ENCODE measurements at regions of chr6 and their contacts with region 1.

Region 1: DNA sequence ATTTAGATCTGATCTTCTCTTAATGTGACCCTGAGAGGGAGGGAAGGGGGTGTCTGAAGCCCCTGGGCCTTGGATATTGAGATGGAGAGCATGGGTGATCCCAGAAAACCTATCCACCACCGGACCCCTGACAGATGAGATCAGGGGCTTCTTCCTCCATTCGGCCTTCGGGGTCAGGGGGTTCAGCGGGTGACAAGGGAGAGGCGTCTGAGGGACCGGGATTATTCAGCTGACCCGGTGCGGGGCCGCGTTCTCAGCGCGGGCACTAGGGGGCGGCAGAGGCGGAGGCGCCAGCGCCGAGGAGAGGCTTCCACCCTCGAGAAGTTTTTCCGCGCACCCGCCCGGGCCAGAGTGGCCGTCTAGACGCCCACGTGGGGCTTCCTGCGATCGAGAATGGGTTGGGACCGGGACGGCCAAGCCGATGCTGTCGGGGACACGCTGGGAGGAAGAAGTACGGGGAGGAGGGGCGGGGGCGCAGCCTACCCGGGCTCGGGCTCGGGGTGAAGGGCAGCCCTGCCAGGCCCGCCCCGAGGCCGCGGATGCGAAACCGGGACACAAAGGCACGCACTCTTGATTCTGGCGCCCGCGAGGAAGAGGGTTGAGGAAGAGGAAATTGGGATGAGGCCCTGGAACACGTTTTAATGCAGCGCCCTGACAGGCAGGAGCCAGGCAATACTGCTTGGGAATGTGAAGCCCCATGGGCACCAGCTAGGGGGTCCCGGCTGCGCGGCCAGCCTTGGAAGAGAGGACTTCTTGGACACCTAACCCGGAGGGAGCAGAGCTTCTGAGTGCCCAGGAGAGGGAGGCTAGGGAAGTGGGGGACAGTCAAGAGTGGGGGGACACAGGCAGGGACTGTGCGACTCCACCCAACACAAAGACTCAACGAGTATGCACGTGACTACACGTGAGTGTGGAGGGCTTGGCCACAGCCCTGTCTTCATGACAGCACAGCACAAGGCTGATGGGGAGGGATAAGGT is 30.6 kb downstream of the COL11A2 start:
- DNase-seq: peak; percentile 92
- ATAC-seq: peak; percentile 91

Region 2: DNA sequence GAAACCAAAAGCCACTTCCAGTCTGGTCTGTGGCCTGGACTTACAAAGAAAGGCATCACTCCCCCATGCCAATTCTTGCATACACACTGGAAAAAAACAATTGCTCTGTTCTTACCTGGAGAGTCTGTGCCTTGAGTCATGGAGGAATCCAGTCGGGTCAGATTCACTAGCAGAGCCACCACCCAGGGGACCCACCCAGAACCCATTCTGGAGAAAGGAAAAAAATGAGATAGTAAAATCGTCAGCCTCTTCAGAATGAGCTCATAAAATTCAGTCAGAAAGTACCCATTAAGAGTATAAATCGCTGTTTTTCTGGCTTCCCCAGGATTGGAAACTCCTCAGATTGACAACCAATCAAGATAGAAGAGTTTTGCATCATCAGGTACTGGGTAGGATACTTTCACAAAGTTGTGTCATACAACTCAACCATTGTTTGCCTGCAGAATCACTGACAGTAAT is 344.9 kb before region 1 on chr6 and contains the start of gene HLA-DOB:
- intact Hi-C with region 1: no loop called
- DNase-seq: no peak
- ATAC-seq: no peak
- total RNA-seq, gene HLA-DOB: not detected

Region 3: GRCh38 chr6:33200219-33201146 is 38.8 kb after region 1 on chr6 and contains the starts of genes RXRB and SLC39A7:
- intact Hi-C with region 1: loop called (anchors 2 kb)
- DNase-seq: peak; percentile 100
- ATAC-seq: peak; percentile 89
- total RNA-seq, gene RXRB: 39.3 TPM
- total RNA-seq, gene SLC39A7: 55.4 TPM

Region 4: GRCh38 chr6:33417903-33418689 is 256.5 kb after region 1 on chr6 and contains the start of gene CUTA:
- intact Hi-C with region 1: no loop called
- DNase-seq: peak; percentile 99
- ATAC-seq: peak; percentile 95
- total RNA-seq, gene CUTA: 107 TPM